CD8-positive, alpha-beta T cell (primary cell): ENCODE measurements at regions of chr2 and their contacts with region 1.

Region 1: DNA sequence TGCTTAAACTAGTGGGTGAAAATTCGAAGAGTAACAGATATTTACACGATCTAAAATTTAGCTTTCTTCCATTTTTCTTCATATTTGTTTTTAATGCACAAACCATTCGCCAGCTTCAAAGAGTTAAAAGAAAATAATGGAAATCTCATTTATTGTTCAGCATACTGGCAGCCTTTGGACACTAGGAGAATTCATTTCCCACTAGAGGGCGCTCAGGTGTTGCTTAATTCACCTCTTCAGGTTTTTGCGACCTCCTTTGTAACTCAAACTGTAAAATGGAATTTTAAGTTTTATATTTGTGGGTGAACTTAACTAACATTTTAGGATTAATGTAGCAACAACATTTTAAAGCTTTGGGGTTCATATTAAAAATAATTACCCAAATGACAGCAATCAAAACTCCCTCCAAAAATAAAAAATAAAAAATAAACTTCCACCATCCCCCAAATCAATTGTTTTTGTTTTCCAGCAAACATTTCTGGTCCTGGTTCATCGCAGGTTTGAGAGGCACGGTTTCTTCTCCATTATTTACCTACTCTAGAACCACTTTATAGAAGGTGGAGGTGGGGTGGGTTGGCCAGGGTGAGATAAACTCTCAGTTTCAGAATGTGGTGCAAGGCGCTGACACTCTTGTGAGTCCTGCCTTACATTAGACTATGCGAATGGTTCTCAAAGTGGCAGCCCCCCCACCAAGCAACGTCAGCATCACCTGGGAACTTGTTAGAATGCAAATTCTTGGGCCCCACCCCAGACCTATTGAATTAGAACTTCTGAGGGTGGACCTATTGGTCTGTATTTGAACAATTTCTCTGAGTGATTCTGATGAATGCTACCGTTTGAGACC is 24.7 kb upstream of the PNPT1 start:
- DNase-seq: peak in 7 of 9 experiments; percentile 7 to 60 (median 40)
- ATAC-seq: no peak
- H3K4me3 ChIP-seq: no peak overlapping the region
- H3K4me3 Mint-ChIP-seq: no peak overlapping the region
- H3K27ac ChIP-seq: no peak overlapping the region
- H3K27ac Mint-ChIP-seq: no peak overlapping the region
- H3K4me1 ChIP-seq: no peaks in the 10 kb centered on the region
- H3K4me1 Mint-ChIP-seq: no peaks in the 10 kb centered on the region
- H3K27me3 ChIP-seq: no peaks in the 10 kb centered on the region
- H3K27me3 Mint-ChIP-seq: peaks cover 7% of the 10 kb centered on the region
- CTCF ChIP-seq: peak; percentile 83

Region 2: DNA sequence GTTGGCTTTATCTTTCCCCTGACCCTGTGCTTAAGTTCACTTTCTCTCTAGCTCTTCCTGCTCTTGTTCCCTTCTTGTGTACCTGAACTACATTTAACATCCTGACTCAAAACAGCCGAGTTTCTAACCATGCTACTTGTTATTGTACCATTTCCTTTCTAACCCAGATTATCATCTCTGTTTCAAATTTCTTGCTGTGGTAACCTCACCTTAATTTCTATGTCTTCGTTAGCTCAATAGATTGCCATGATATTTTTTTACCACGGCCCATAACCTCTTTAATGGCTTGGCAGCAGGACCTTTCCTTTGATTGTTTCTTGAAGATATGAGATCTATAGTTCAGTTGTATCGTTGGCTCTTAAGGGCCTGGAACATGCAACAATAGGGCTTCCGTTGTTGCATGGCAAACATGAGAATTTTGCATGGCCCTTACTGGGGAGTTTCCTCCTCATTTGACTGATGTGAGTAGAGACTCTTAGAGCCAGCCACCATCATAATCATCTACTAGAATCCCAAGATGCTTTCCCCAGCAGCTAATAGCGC is 187.8 kb before region 1 on chr2:
- CTCF ChIA-PET with region 1: no interaction called
- POLR2A ChIA-PET with region 1: no interaction called
- intact Hi-C with region 1: no loop called
- DNase-seq: no peak
- ATAC-seq: no peak
- H3K4me3 ChIP-seq: no peak overlapping the region
- H3K4me3 Mint-ChIP-seq: no peak overlapping the region
- H3K27ac ChIP-seq: no peak overlapping the region
- H3K27ac Mint-ChIP-seq: peak overlapping the region; percentile 61
- H3K4me1 ChIP-seq: no peaks in the 10 kb centered on the region
- H3K4me1 Mint-ChIP-seq: peaks cover 8% of the 10 kb centered on the region
- H3K27me3 ChIP-seq: no peaks in the 10 kb centered on the region
- H3K27me3 Mint-ChIP-seq: no peaks in the 10 kb centered on the region
- CTCF ChIP-seq: no peak

Region 3: GRCh38 chr2:56132138-56132537 is 413.8 kb after region 1 on chr2:
- CTCF ChIA-PET with region 1: interaction called, 3 read pairs
- POLR2A ChIA-PET with region 1: no interaction called
- intact Hi-C with region 1: loop called in 1 of 2 experiments (anchors 5 kb)
- DNase-seq: peak in 1 of 9 experiments; percentile 13
- ATAC-seq: no peak
- H3K4me3 ChIP-seq: no peak overlapping the region
- H3K4me3 Mint-ChIP-seq: no peak overlapping the region
- H3K27ac ChIP-seq: no peak overlapping the region
- H3K27ac Mint-ChIP-seq: no peak overlapping the region
- H3K4me1 ChIP-seq: no peaks in the 10 kb centered on the region
- H3K4me1 Mint-ChIP-seq: no peaks in the 10 kb centered on the region
- H3K27me3 ChIP-seq: no peaks in the 10 kb centered on the region
- H3K27me3 Mint-ChIP-seq: peaks cover 3% of the 10 kb centered on the region
- CTCF ChIP-seq: no peak

Region 4: GRCh38 chr2:57497489-57498096 is 1779.2 kb after region 1 on chr2:
- CTCF ChIA-PET with region 1: no interaction called
- POLR2A ChIA-PET with region 1: no interaction called
- intact Hi-C with region 1: loop called (anchors 5 kb)
- DNase-seq: peak in 3 of 9 experiments; percentile 5 to 17 (median 11)
- ATAC-seq: no peak
- H3K4me3 ChIP-seq: no peak overlapping the region
- H3K4me3 Mint-ChIP-seq: no peak overlapping the region
- H3K27ac ChIP-seq: no peak overlapping the region
- H3K27ac Mint-ChIP-seq: no peak overlapping the region
- H3K4me1 ChIP-seq: no peaks in the 10 kb centered on the region
- H3K4me1 Mint-ChIP-seq: no peaks in the 10 kb centered on the region
- H3K27me3 ChIP-seq: no peaks in the 10 kb centered on the region
- H3K27me3 Mint-ChIP-seq: no peaks in the 10 kb centered on the region
- CTCF ChIP-seq: peak; percentile 47

Region 5: GRCh38 chr2:57516698-57517340 is 1798.4 kb after region 1 on chr2:
- CTCF ChIA-PET with region 1: interaction called, 3 read pairs
- POLR2A ChIA-PET with region 1: no interaction called
- intact Hi-C with region 1: loop called in 1 of 2 experiments (anchors 5 kb)
- DNase-seq: peak in 2 of 9 experiments; percentile 7 to 27
- ATAC-seq: no peak
- H3K4me3 ChIP-seq: no peak overlapping the region
- H3K4me3 Mint-ChIP-seq: no peak overlapping the region
- H3K27ac ChIP-seq: no peak overlapping the region
- H3K27ac Mint-ChIP-seq: no peak overlapping the region
- H3K4me1 ChIP-seq: no peaks in the 10 kb centered on the region
- H3K4me1 Mint-ChIP-seq: no peaks in the 10 kb centered on the region
- H3K27me3 ChIP-seq: no peaks in the 10 kb centered on the region
- H3K27me3 Mint-ChIP-seq: no peaks in the 10 kb centered on the region
- CTCF ChIP-seq: peak; percentile 61